Spleen (tissue), 13 donors: ENCODE measurements at regions of chr3 and their contacts with region 1.

Region 1: GRCh38 chr3:39288300-39288808 is 8.5 kb upstream of the CX3CR1 start:
- DNase-seq: peak; percentile 95
- H3K4me3 ChIP-seq: no peak overlapping the region
- H3K27ac ChIP-seq: no peak overlapping the region
- H3K4me1 ChIP-seq: peaks cover 0 to 49% (median 21%) of the 10 kb centered on the region in 6 donors
- H3K27me3 ChIP-seq: no peaks in the 10 kb centered on the region
- CTCF ChIP-seq: peak; percentile 90 to 97 (median 95)
- POLR2A ChIP-seq: no peak

Region 2: GRCh38 chr3:38521391-38521987 is 766.9 kb before region 1 on chr3:
- intact Hi-C with region 1: loop called (anchors 10 kb)
- DNase-seq: no peak
- H3K4me3 ChIP-seq: no peak overlapping the region
- H3K27ac ChIP-seq: no peak overlapping the region
- H3K4me1 ChIP-seq: peaks cover 0 to 20% (median 0%) of the 10 kb centered on the region in 6 donors
- H3K27me3 ChIP-seq: no peaks in the 10 kb centered on the region
- CTCF ChIP-seq: peak; percentile 69 to 90 (median 86)
- POLR2A ChIP-seq: no peak

Region 3: GRCh38 chr3:38829404-38829803 is 458.9 kb before region 1 on chr3:
- intact Hi-C with region 1: no loop called
- DNase-seq: no peak
- H3K4me3 ChIP-seq: no peak overlapping the region
- H3K27ac ChIP-seq: no peak overlapping the region
- H3K4me1 ChIP-seq: peaks cover 0 to 7% (median 6%) of the 10 kb centered on the region in 6 donors
- H3K27me3 ChIP-seq: no peaks in the 10 kb centered on the region
- CTCF ChIP-seq: no peak
- POLR2A ChIP-seq: no peak

Region 4: GRCh38 chr3:39107388-39108199 is 180.8 kb before region 1 on chr3 and contains the starts of genes GORASP1 and TTC21A:
- intact Hi-C with region 1: loop called (anchors 10 kb)
- DNase-seq: peak; percentile 96
- H3K4me3 ChIP-seq: peak within 1 kb of the TSS; percentile 74 to 97 (median 84)
- H3K27ac ChIP-seq: peak within 1 kb of the TSS; percentile 82 to 94 (median 92)
- H3K4me1 ChIP-seq: peaks cover 12 to 65% (median 52%) of the 10 kb centered on the region in 6 donors
- H3K27me3 ChIP-seq: no peaks in the 10 kb centered on the region
- CTCF ChIP-seq: peak in 2 of 11 experiments; percentile 7 to 31
- POLR2A ChIP-seq: no peak
- total RNA-seq, gene GORASP1: 47.3 to 74.5 (median 65.5) TPM
- total RNA-seq, gene TTC21A: 11.6 to 17.5 (median 13.2) TPM

Region 5: GRCh38 chr3:39124896-39125844 is 163.2 kb before region 1 on chr3:
- intact Hi-C with region 1: loop called (anchors 5 kb)
- DNase-seq: peak; percentile 55
- H3K4me3 ChIP-seq: no peak overlapping the region
- H3K27ac ChIP-seq: no peak overlapping the region
- H3K4me1 ChIP-seq: peaks cover 8 to 57% (median 34%) of the 10 kb centered on the region in 6 donors
- H3K27me3 ChIP-seq: no peaks in the 10 kb centered on the region
- CTCF ChIP-seq: no peak
- POLR2A ChIP-seq: no peak

Region 6: DNA sequence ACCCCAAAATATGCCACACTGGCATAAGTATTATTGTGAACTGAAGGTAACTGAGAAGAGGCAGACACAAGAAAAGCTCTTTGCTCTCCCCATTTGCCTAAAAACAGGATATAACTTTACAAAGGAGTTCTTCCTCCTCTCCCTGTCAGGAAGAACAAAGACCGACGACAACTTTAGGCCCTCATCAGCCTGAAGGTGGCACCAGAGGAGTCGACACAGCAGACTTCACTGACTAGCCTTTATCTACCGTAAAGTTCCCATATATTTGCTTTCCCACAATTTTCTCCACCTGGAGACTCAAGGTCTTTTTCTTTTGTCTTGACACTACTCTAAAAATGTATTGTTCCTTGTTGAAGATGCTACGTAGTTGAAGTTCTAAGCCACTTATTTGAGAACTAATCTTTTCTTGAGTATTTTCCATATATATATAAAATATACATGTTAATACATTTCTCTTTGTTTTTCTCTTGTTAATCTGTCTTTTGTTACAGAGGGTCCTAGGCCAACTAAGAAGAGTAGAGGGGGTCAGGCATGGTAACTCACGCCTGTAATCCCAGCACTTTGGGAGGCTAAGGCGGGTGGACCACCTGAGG is 79.8 kb before region 1 on chr3:
- intact Hi-C with region 1: loop called (anchors 5 kb)
- DNase-seq: no peak
- H3K4me3 ChIP-seq: no peak overlapping the region
- H3K27ac ChIP-seq: no peak overlapping the region
- H3K4me1 ChIP-seq: peaks cover 0 to 16% (median 10%) of the 10 kb centered on the region in 6 donors
- H3K27me3 ChIP-seq: peaks cover 0 to 8% (median 0%) of the 10 kb centered on the region in 7 donors
- CTCF ChIP-seq: peak in 10 of 11 experiments; percentile 49 to 76 (median 66)
- POLR2A ChIP-seq: no peak

Region 7: DNA sequence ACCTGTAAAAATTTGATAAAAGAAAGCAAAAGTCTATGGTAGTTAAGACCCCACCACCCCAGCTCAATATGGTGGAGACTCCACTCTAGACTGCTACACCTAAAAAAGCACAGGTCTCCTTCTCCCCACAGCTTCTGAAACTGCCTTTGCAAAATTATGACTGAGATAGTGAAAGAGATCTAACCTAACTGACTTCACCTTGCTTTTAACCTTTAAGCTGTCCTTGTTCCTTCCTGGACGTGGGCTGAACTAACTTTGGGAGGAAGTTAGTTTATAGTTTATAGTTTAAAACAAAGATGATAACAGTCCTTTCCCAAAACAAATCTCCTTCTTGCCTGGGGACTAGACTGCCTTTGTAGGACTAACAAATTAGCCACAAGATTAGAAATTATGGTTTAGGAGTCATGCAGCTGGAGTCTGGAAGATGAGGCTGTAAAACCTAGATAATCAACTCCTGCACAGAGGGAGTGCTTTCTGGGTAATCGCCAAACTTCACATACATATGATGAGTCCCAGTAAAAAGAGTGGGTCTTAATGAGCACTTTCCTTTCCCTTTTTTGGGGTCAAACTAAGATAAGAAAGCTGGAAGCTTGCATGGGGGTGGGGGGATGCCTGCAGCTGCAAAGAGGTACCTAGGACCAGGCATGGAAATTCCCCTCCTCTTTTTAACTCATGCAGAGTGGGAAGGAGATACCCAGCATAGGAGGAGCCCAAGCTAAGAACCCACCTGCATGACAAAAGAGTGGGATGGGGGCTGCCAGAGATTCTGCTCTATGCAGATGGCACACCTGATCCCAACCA is 58.6 kb after region 1 on chr3:
- intact Hi-C with region 1: no loop called
- DNase-seq: no peak
- H3K4me3 ChIP-seq: no peak overlapping the region
- H3K27ac ChIP-seq: no peak overlapping the region
- H3K4me1 ChIP-seq: peaks cover 0 to 5% (median 0%) of the 10 kb centered on the region in 6 donors
- H3K27me3 ChIP-seq: no peaks in the 10 kb centered on the region
- CTCF ChIP-seq: no peak
- POLR2A ChIP-seq: no peak